ENCODE measurements at regions of chr1 and their contacts with region 1.

Region 1: GRCh38 chr1:158117854-158118704 is 62.6 kb upstream of the CD1D start:
- DNase-seq: no peak
- H3K4me3 Mint-ChIP-seq: no peak overlapping the region
- H3K27ac Mint-ChIP-seq: no peak overlapping the region
- H3K4me1 Mint-ChIP-seq: peaks cover 5% of the 10 kb centered on the region
- H3K27me3 Mint-ChIP-seq: peaks cover 59% of the 10 kb centered on the region

Region 2: DNA sequence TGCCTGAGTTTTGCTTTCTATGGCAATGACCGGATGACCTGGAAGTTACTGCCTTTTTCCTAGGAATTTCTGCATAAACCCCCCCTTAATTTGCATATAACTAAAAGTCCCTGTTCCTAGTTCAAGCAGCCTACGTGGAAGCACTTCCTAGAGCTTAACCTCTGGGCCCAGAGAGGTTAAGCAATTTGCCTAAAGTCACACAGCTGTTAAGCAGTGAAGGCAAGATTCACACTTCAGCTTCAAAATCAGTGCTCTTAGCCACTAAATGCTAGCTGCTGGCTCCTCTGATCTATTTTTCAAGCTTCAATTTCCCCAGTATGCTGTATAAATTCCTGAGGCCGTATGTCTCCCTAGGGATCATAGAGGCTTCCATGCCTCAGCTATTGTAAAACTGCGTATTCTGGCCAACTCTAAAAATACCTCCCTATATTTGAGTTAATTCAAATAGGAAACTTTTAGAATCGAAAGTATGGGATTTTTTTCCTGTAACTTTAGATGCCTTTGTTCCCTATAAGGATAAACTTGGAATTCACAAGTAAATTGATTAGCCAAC is 223.4 kb before region 1 on chr1:
- CTCF ChIA-PET with region 1: no interaction called
- POLR2A ChIA-PET with region 1: no interaction called
- DNase-seq: no peak
- H3K4me3 Mint-ChIP-seq: no peak overlapping the region
- H3K27ac Mint-ChIP-seq: no peak overlapping the region
- H3K4me1 Mint-ChIP-seq: no peaks in the 10 kb centered on the region
- H3K27me3 Mint-ChIP-seq: no peaks in the 10 kb centered on the region

Region 3: DNA sequence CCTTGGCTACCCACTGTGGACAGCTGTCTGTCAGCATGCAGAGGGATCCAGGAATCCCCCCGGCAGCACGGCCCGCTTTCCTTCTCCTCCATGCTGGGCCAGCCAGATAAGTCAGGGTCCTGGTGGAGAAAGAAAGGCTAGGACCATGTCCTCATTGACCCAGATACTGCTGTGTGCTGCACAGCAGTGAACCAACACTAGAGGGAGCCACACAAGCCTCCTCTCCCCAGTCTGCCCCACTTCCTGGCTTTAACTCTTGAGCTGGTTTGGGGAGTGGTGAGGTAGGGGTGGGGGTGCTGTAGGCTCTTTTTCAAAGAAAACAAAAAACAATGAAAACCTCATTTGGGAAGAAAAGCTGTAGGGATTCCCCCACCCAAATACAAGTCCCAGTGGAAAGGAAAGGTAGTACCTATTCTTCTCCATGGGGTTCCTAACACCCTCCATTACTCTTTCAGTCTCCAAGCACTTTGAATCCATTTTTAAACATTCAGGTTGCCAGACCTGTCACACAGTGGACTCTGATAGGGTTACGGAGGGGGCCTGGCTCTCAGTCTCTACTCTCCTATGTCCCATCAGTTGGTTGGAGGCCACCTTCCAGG is 22.2 kb before region 1 on chr1:
- CTCF ChIA-PET with region 1: interaction called, 87 read pairs
- POLR2A ChIA-PET with region 1: no interaction called
- DNase-seq: peak; percentile 45
- H3K4me3 Mint-ChIP-seq: no peak overlapping the region
- H3K27ac Mint-ChIP-seq: no peak overlapping the region
- H3K4me1 Mint-ChIP-seq: no peaks in the 10 kb centered on the region
- H3K27me3 Mint-ChIP-seq: no peaks in the 10 kb centered on the region

Region 4: GRCh38 chr1:158675563-158676323 is 557.7 kb after region 1 on chr1:
- CTCF ChIA-PET with region 1: no interaction called
- POLR2A ChIA-PET with region 1: no interaction called
- DNase-seq: no peak
- H3K4me3 Mint-ChIP-seq: no peak overlapping the region
- H3K27ac Mint-ChIP-seq: no peak overlapping the region
- H3K4me1 Mint-ChIP-seq: no peaks in the 10 kb centered on the region
- H3K27me3 Mint-ChIP-seq: peaks cover 3% of the 10 kb centered on the region

Measured in activated CD4-positive, alpha-beta memory T cell treated with anti-CD3 and anti-CD28 coated beads, Interleukin-2, amount 10 ng/mL, durations not matched to agents 7 days and 5 days (primary cell).